ENCODE measurements at regions of chr22 and their contacts with region 1.

Region 1: GRCh38 chr22:31080848-31081649 is at the start of gene SMTN:
- DNase-seq: peak; percentile 90 to 96
- H3K4me3 ChIP-seq: peak within 1 kb of the TSS; percentile 90 to 92
- H3K27ac ChIP-seq: peak within 1 kb of the TSS; percentile 99 to 100
- H3K4me1 ChIP-seq: peaks cover 0 to 53% (median 37%) of the 10 kb centered on the region in 4 donors
- H3K27me3 ChIP-seq: no peaks in the 10 kb centered on the region
- CTCF ChIP-seq: no peak

Region 2: GRCh38 chr22:30947816-30948454 is 133.1 kb before region 1 on chr22:
- intact Hi-C with region 1: loop called (anchors 1 kb)
- DNase-seq: no peak
- H3K4me3 ChIP-seq: no peak overlapping the region
- H3K27ac ChIP-seq: peak overlapping the region; percentile 80 to 83
- H3K4me1 ChIP-seq: peaks cover 0 to 100% (median 71%) of the 10 kb centered on the region in 4 donors
- H3K27me3 ChIP-seq: no peaks in the 10 kb centered on the region
- CTCF ChIP-seq: peak; percentile 59 to 71

Region 3: DNA sequence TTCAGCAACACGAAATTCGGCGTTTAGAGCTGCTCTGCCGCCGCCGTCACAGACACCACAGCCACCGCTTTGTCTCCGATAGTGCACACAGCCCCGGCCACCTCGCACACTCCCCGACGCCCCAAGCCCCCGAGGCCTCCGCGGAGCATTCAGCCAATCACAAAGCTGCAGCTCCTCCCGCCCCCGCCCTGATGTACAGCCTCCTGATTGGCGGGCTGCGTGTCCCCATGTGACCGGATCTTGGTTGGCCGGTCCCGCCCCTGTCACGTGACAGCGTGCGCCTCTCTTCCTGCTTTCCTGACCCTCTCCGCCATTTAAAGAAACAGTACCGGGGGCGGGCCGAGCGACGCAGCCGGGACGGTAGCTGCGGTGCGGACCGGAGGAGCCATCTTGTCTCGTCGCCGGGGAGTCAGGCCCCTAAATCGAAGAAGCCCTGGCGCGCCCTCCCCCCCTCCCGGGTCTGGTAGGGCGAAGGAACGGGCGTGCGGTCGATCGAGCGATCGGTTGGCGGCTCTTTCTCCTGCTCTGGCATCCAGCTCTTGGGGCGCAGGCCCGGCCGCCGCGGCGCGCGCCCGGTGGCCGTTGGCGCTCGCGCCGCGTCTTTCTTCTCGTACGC is 112.0 kb before region 1 on chr22 and contains the start of gene TUG1:
- intact Hi-C with region 1: loop called (anchors 2 kb)
- DNase-seq: peak; percentile 98 to 99
- H3K4me3 ChIP-seq: peak within 1 kb of the TSS; percentile 83 to 95
- H3K27ac ChIP-seq: peak within 1 kb of the TSS; percentile 95 to 96
- H3K4me1 ChIP-seq: peaks cover 0 to 61% (median 19%) of the 10 kb centered on the region in 4 donors
- H3K27me3 ChIP-seq: no peaks in the 10 kb centered on the region
- CTCF ChIP-seq: peak in 1 of 2 experiments; percentile 3

Region 4: GRCh38 chr22:31036671-31037550 is 44.1 kb before region 1 on chr22:
- intact Hi-C with region 1: loop called (anchors 5 kb)
- DNase-seq: peak; percentile 42 to 85
- H3K4me3 ChIP-seq: peak overlapping the region; percentile 25 to 30
- H3K27ac ChIP-seq: peak overlapping the region; percentile 79 to 80
- H3K4me1 ChIP-seq: peaks cover 0 to 57% (median 42%) of the 10 kb centered on the region in 4 donors
- H3K27me3 ChIP-seq: no peaks in the 10 kb centered on the region
- CTCF ChIP-seq: no peak

Measured in tibial artery (tissue), 4 donors.